PC-3 (cell line): ENCODE measurements at regions of chr2 and their contacts with region 1.

Region 1: DNA sequence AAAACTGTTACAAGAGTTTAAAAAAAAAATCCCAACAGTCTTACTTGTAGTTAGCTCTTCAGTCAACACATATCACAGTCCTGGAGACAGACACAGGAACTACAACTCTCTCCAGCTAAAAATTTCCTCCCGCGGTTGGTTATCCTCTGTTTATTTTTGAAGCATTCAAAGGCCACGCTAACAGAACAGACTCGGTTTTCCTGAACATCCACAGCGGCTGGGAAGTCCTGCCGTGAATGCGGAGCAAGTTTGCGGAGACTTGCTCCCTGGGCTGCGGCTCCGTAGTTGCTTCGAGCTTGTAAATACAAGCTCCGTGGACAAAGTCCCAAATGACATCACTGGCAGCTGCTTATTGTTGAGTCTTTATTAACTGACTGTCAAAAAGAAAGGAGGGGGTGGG is at the start of gene NCKAP5:
- DNase-seq: peak; percentile 59
- ATAC-seq: peak; percentile 59
- H3K4me3 ChIP-seq: peak within 1 kb of the TSS; percentile 69
- H3K27ac ChIP-seq: peak within 1 kb of the TSS; percentile 27
- H3K4me1 ChIP-seq: peaks cover 35% of the 10 kb centered on the region
- H3K27me3 ChIP-seq: no peaks in the 10 kb centered on the region
- CTCF ChIP-seq: no peak; the same call in 1 of the 2 replicates
- total RNA-seq, gene NCKAP5: 3.2 and 4.8 TPM in 2 replicates

Region 2: DNA sequence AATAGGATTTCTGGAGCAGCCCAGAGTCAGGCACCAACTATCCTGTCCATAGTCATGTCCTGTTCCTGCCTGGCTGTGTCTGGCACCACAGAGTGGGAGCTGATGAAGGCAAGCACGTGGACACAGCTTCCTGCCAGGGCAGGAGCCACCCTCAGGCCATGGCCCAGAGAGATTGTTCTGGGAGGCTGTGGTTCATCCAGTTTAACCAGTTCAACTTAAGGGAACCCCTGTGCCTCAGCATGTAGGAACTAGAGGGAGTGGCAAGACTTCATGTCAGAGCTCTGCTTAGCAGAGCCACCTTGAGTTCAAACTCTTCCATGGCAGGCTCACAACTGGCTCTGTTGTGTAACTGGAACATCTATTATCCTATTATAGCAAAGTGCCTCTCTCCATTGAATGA is 73.3 kb after region 1 on chr2:
- CTCF ChIA-PET with region 1: interaction called, 13 read pairs
- POLR2A ChIA-PET with region 1: no interaction called
- intact Hi-C with region 1: no loop called
- DNase-seq: peak; percentile 98
- ATAC-seq: peak; percentile 94
- H3K4me3 ChIP-seq: peak overlapping the region; percentile 46; the same call in 1 of the 2 replicates
- H3K27ac ChIP-seq: peak overlapping the region; percentile 72
- H3K4me1 ChIP-seq: peaks cover 33% of the 10 kb centered on the region
- H3K27me3 ChIP-seq: no peaks in the 10 kb centered on the region
- CTCF ChIP-seq: peak; percentile 80

Region 3: GRCh38 chr2:133733901-133734255 is 165.7 kb after region 1 on chr2:
- CTCF ChIA-PET with region 1: no interaction called
- POLR2A ChIA-PET with region 1: no interaction called
- intact Hi-C with region 1: no loop called
- DNase-seq: no peak
- ATAC-seq: no peak
- H3K4me3 ChIP-seq: no peak overlapping the region
- H3K27ac ChIP-seq: no peak overlapping the region
- H3K4me1 ChIP-seq: no peaks in the 10 kb centered on the region
- H3K27me3 ChIP-seq: no peaks in the 10 kb centered on the region
- CTCF ChIP-seq: no peak